Dendritic cell treated with granulocyte-macrophage colony-stimulating factor and Interleukin-4, amounts not matched to agents 40 ng/mL and 50 ng/mL, for 4 days (primary cell): ENCODE measurements at regions of chr17 and their contacts with region 1.

Region 1: DNA sequence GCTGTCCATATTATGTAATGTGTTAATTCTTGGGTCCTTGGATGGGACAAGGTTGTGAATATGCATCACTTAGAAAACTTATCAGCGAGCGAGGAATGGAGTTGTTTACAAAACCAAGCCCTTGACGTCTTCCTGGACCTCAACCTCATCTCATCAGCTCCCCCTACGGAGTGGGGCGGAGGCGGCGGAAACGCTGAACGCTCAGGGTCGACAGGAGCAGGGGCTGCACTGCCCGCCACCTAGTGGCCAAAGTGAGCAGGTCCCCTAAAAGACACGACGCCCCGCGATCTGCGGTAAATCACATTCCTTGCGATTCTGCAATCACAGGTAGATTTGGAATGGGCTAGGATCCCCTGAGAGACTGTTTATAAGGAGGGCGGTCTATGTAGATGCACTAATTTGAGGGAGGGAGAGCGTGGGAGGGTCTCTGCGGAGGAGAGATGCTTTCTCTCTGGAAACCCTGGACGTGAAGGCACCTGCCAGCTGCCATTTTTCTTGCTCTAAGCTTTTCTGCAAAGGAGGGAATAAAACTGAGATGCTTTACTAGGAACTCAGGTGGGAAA is 5.4 kb upstream of the ICAM2 start:
- H3K4me3 Mint-ChIP-seq: peak overlapping the region; percentile 71
- H3K27ac Mint-ChIP-seq: peak overlapping the region; percentile 23
- H3K4me1 Mint-ChIP-seq: peaks cover 17% of the 10 kb centered on the region
- H3K27me3 Mint-ChIP-seq: peaks cover 5% of the 10 kb centered on the region

Region 2: DNA sequence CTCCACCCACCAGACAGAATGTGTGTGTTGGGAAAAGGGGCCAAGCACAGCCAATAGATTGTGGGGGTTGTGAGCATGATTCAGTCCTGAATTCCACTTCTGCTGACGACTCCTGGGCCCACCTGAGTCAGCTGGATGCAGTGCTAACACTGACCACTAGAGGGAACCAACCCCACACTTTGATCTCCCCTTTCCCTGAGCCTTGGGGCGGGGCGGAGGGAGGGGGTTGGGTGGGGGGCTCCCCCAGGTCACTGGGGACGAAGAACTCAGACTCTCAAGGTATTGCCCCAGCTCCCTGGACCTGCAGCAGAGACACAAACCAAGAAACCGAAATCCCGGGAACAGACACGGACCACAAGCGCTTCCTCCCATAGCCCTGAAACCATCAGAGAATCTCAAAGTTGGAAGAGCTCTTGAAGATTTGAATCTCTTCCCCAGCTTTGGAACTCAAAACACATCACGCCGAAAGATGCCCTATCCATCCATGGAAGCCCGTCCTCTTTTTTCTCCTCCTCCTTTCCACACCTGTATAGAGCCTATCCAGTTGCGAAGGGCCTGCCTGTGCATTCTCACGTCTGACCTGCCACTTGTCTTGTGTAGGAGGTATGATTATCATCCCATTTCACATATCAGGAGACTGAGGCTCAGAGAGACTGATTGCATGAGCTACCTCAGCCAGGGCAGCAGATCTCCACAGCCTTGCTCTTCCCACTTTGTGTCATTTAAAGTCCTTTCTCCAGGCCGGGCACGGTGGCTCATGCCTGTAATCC is 114.0 kb before region 1 on chr17:
- intact Hi-C with region 1: loop called (anchors 2 kb)
- H3K4me3 Mint-ChIP-seq: no peak overlapping the region
- H3K27ac Mint-ChIP-seq: no peak overlapping the region
- H3K4me1 Mint-ChIP-seq: peaks cover 14% of the 10 kb centered on the region
- H3K27me3 Mint-ChIP-seq: peaks cover 13% of the 10 kb centered on the region

Region 3: DNA sequence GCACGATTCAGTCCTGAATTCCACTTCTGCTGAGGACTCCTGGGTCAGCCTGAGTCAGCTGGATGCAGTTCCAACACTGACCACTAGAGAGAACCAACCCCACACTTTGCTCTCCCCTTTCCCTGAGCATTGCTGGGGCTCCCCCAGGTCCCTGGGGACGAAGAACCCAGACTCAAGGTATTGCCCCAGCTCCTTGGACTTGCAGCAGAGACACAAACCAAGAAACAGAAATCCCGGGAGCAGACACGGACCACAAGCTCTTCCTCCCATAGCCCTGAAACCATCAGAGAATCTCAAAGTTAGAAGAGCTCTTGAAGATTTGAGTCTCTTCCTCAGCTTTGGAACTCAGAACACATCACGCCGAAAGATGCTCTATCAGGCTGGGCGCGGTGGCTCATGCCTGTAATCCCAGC is 106.5 kb before region 1 on chr17:
- intact Hi-C with region 1: loop called (anchors 1 kb)
- H3K4me3 Mint-ChIP-seq: no peak overlapping the region
- H3K27ac Mint-ChIP-seq: no peak overlapping the region
- H3K4me1 Mint-ChIP-seq: peaks cover 35% of the 10 kb centered on the region
- H3K27me3 Mint-ChIP-seq: peaks cover 18% of the 10 kb centered on the region

Region 4: GRCh38 chr17:64281962-64282727 is 256.3 kb after region 1 on chr17:
- intact Hi-C with region 1: loop called (anchors 2 kb)
- H3K4me3 Mint-ChIP-seq: no peak overlapping the region
- H3K27ac Mint-ChIP-seq: no peak overlapping the region
- H3K4me1 Mint-ChIP-seq: peaks cover 34% of the 10 kb centered on the region
- H3K27me3 Mint-ChIP-seq: no peaks in the 10 kb centered on the region